Activated CD8-positive, alpha-beta memory T cell treated with anti-CD3 and anti-CD28 coated beads, Interleukin-2, amount 10 ng/mL, durations not matched to agents 7 days and 5 days (primary cell): ENCODE measurements at regions of chr16 and their contacts with region 1.

Region 1: GRCh38 chr16:48632137-48632774 is 22.3 kb upstream of the N4BP1 start:
- DNase-seq: peak; percentile 36
- ATAC-seq: no peak
- H3K4me3 Mint-ChIP-seq: no peak overlapping the region
- H3K27ac Mint-ChIP-seq: no peak overlapping the region
- H3K4me1 Mint-ChIP-seq: peaks cover 11% of the 10 kb centered on the region
- H3K27me3 Mint-ChIP-seq: peaks cover 2% of the 10 kb centered on the region

Region 2: DNA sequence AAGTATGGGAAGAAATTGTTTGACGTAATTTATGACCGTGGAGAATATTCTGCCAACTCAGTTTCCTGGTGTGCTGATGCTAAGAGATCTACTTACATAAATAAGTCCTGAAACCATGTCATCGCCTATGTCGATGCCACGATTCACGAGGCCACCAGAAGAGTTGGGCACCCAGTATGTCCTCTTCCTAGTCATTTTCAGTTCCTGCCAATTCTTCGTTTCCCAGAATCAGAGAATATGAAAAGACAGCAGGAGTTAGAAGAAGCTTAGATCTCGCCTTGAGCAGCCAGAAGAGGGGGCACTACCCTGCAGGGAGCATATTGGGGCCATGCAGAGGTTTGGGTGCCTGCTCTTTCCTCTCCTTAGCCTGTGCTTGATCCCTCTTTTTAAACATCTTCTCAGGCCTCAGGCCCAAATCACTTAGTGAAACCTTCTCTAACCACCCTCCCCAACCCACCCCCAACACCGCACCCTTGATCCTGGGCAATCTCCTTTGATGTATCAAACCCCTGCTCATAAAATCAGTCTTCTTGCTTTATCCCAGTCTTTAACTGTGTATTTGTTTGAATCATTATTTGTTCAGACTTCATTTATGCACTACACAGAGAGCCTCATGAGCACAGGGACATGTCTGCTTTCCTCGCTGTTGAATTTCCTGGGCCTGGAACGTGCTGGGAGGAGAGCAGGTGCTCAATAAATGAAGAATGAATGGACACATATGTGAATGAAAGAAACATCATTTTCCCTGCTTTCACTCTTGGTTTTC is 400.3 kb before region 1 on chr16:
- CTCF ChIA-PET with region 1: interaction called, 26 read pairs
- DNase-seq: peak; percentile 75
- ATAC-seq: peak; percentile 89
- H3K4me3 Mint-ChIP-seq: no peak overlapping the region
- H3K27ac Mint-ChIP-seq: peak overlapping the region; percentile 64
- H3K4me1 Mint-ChIP-seq: peaks cover 24% of the 10 kb centered on the region
- H3K27me3 Mint-ChIP-seq: peaks cover 3% of the 10 kb centered on the region

Region 3: DNA sequence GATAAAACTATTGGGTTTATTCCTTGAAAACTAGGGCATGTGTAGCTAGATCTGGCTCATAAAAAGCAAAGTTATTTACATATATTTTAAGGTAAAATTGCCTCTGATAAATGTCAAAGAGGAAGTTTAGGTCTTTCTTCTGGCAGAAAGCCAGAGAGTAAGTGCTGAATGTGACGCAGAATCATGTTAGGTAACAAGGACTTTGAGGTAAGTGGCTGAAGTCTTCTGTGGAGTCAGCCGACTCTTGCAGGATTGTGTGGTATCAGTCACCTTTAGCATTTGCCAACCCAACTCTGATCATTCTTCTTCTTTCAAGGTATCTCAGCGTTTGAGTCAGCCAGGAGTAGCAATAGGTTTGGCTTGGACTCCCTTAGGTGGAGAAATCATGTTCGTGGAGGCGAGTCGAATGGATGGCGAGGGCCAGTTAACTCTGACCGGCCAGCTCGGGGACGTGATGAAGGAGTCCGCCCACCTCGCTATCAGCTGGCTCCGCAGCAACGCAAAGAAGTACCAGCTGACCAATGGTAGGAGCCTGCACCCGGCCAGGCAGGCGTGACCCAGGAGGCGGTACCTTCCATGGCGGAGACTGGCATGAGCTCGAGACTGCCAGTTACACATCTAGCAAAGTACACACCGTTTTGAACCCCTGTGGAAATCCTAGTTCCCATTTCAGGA is 284.9 kb before region 1 on chr16:
- CTCF ChIA-PET with region 1: interaction called, 51 read pairs
- DNase-seq: no peak
- ATAC-seq: no peak
- H3K4me3 Mint-ChIP-seq: no peak overlapping the region
- H3K27ac Mint-ChIP-seq: no peak overlapping the region
- H3K4me1 Mint-ChIP-seq: no peaks in the 10 kb centered on the region
- H3K27me3 Mint-ChIP-seq: no peaks in the 10 kb centered on the region

Region 4: GRCh38 chr16:48353565-48354163 is 278.6 kb before region 1 on chr16:
- CTCF ChIA-PET with region 1: interaction called, 51 read pairs
- DNase-seq: peak; percentile 80
- ATAC-seq: peak; percentile 95
- H3K4me3 Mint-ChIP-seq: no peak overlapping the region
- H3K27ac Mint-ChIP-seq: peak overlapping the region; percentile 36
- H3K4me1 Mint-ChIP-seq: peaks cover 12% of the 10 kb centered on the region
- H3K27me3 Mint-ChIP-seq: no peaks in the 10 kb centered on the region

Region 5: GRCh38 chr16:48365581-48366164 is 266.6 kb before region 1 on chr16:
- CTCF ChIA-PET with region 1: interaction called, 18 read pairs
- DNase-seq: peak; percentile 91
- ATAC-seq: peak; percentile 99
- H3K4me3 Mint-ChIP-seq: peak overlapping the region; percentile 97
- H3K27ac Mint-ChIP-seq: peak overlapping the region; percentile 99
- H3K4me1 Mint-ChIP-seq: peaks cover 38% of the 10 kb centered on the region
- H3K27me3 Mint-ChIP-seq: no peaks in the 10 kb centered on the region

Region 6: GRCh38 chr16:48385272-48386150 is 246.7 kb before region 1 on chr16 and contains the start of gene SIAH1:
- CTCF ChIA-PET with region 1: interaction called, 13 read pairs
- DNase-seq: peak; percentile 87
- ATAC-seq: peak; percentile 84
- H3K4me3 Mint-ChIP-seq: peak within 1 kb of the TSS; percentile 85
- H3K27ac Mint-ChIP-seq: peak within 1 kb of the TSS; percentile 86
- H3K4me1 Mint-ChIP-seq: peaks cover 21% of the 10 kb centered on the region
- H3K27me3 Mint-ChIP-seq: no peaks in the 10 kb centered on the region
- total RNA-seq, gene SIAH1: 15.5 to 17.6 TPM

Region 7: GRCh38 chr16:48704710-48705109 is 72.5 kb after region 1 on chr16:
- CTCF ChIA-PET with region 1: no interaction called
- DNase-seq: no peak
- ATAC-seq: no peak
- H3K4me3 Mint-ChIP-seq: no peak overlapping the region
- H3K27ac Mint-ChIP-seq: no peak overlapping the region
- H3K4me1 Mint-ChIP-seq: no peaks in the 10 kb centered on the region
- H3K27me3 Mint-ChIP-seq: no peaks in the 10 kb centered on the region